Posterior cingulate gyrus (tissue), 11 donors: ENCODE measurements at regions of chr6 and their contacts with region 1.

Region 1: DNA sequence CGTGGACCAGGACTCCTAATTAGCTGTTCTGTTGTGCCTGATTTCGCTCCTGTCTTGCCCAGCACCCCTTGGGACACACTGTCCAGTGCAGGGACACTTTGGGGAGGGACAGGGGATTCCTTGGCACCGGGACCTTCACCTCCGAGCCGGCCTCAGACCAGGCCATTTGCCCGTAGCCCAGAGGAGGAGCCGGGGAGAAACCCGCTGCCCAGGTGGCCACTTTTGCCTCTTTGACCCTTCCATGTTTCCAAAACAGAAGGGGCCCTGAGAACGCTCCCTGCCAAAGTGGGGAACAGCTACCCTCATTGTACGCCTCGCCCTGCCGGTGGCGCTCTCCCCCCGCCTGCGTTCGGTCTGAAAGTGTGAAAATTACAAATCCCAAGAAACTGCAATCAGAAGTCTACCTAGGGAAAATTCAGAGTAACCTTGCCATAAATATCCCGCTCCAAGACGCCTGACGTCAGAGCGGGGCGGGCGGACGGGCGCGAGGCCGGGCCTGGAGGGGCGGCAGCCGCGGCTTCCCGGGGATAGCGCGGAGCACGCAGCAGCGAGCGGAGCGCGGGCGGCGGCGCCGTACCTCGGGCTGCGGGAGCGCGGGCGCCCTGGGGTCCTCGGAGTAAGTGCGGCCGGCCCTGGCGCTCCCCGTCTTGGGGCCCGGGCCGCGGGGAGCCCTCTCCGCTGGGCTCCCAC is at the start of gene DAAM2:
- DNase-seq: peak in 7 of 10 donors; percentile 39 to 95 (median 74)

Region 2: GRCh38 chr6:39377539-39377950 is 414.4 kb before region 1 on chr6:
- intact Hi-C with region 1: loop called (anchors 10 kb)
- DNase-seq: peak; percentile 44 to 95 (median 80)

Region 3: DNA sequence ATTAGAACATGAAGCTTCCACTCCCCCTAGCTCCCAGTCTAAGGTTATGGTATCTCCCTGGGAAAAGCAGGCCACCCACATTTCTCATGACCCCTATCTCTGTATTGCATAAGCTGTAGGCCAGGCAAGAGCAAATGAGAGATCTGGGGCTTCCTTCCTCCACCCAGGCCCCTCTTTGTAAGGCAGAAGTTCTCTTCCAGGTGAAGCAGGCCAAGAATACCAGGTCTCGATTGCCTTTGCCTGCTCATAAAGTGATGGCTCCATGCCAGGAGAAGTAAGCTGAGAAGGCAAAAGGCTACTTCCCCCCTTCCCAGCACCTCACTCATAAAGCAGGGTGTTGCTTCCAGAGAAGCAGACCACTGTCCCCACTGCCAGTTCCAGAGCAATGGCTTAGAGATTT is 325.4 kb before region 1 on chr6:
- intact Hi-C with region 1: no loop called
- DNase-seq: no peak

Region 4: DNA sequence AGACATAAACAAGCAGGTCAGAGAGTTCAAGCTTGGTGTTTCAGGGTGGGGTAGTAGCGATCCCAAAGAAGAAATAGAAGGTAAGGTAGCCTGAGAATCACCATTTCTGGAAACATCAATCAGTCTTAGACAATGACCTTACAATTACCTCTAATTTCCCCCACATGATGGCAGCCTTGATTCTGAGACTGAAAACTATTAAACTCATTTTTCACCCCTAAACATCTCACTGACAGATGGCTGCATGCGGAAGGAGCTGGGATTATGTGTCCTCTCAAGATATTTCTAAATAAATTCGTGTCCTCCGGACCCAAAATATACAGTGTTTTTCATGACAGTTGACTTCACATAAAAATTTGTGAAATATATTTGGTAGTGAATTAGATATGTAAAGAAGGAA is 127.8 kb before region 1 on chr6:
- intact Hi-C with region 1: loop called (anchors 10 kb)
- DNase-seq: no peak

Region 5: DNA sequence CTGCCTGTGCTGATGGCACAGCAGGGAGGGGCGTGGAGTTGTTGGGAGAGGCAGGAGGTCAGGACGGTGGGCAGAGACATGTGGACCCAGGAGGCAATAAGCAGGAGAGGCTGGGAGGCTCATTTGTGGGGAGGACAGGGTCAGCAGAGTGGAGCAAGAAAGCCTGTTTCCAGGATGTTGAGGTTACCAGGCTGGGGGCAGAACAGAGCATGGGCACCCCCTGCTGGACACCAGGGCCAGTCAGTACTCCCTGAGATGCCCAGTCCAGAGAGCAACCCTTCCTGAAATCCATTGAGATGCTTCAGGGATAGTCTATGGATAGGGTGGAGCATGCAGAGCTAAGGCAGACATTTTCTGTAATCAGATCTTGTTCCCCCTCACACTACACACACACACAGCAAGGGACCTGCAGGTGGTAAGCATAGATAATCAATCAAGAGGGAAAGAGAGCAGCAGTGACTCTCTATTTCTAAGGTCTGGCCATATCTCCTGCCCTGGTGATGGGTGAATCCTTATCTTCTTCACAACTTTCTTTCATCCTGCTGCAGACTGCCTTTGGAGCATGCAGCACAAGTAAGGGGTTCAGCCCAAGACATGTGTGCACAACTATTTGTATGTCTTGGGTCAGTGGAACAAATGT is 100.6 kb after region 1 on chr6:
- intact Hi-C with region 1: loop called (anchors 5 kb)
- DNase-seq: peak; percentile 47 to 96 (median 78)